Tibial artery (tissue), 4 donors: ENCODE measurements at regions of chr14 and their contacts with region 1.

Region 1: DNA sequence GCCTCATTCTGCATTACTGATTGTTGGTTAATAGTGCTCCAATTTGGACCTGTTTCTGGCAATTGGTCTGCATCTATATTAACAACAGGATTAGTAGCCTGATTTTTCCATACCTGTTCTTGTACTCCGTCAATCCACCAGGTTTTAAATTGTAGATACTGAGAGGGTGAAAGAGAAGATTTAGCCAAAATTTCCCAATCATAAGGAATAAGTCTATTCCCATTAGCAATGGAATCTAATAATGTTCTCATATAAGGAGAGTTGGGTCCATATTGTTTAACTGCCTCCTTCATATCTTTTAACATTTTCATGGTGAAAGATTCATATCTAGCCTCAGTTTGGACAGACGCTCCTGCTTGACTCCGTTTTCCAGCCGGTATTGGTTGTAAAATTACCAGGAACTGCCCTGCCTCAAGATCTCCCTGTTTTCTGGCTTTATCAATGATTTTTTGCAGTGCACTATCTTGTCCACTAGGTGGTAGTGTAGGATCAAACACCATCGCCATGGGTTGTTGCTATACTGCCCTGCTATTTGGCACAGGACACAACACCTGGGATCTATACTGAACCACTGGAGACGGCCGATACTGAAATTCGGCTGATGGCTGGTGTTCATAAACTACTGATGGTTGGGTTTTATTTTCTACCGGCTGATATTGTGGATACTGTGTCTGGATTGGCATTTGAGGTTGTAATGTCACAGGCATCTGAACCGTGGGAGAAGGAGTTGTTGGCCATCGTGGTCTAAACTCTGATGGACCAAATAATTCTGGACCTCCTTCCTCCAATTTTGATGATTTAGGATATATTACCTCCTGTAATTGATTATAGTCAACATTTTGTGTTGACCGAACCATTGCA is 25.2 kb downstream of the DHRS4L2 start:
- DNase-seq: peak in 1 of 2 donors; percentile 27
- H3K4me3 ChIP-seq: no peak overlapping the region
- H3K27ac ChIP-seq: no peak overlapping the region
- H3K4me1 ChIP-seq: peaks cover 0 to 21% (median 11%) of the 10 kb centered on the region in 4 donors
- H3K27me3 ChIP-seq: no peaks in the 10 kb centered on the region
- CTCF ChIP-seq: peak; percentile 87 to 93

Region 2: GRCh38 chr14:24108336-24108874 is 94.5 kb after region 1 on chr14:
- intact Hi-C with region 1: loop called (anchors 5 kb)
- DNase-seq: no peak
- H3K4me3 ChIP-seq: no peak overlapping the region
- H3K27ac ChIP-seq: no peak overlapping the region
- H3K4me1 ChIP-seq: peaks cover 0 to 8% (median 5%) of the 10 kb centered on the region in 4 donors
- H3K27me3 ChIP-seq: no peaks in the 10 kb centered on the region
- CTCF ChIP-seq: no peak